GM12878 (cell line): ENCODE measurements at regions of chrX and their contacts with region 1.

Region 1: GRCh38 chrX:53317365-53318069 is 36.1 kb upstream of the IQSEC2 start:
- DNase-seq: no peak
- ATAC-seq: peak; percentile 95
- H3K4me3 ChIP-seq: no peak overlapping the region
- H3K27ac ChIP-seq: no peak overlapping the region
- H3K4me1 ChIP-seq: peaks cover 3% of the 10 kb centered on the region; the same call in 1 of the 2 replicates
- H3K27me3 ChIP-seq: peaks cover 15% of the 10 kb centered on the region in 2 experiments
- CTCF ChIP-seq: peak; percentile 83 to 90 (median 87)
- EP300 ChIP-seq: no peak
- POLR2A ChIP-seq: no peak
- RAD21 ChIP-seq: peak; percentile 70

Region 2: DNA sequence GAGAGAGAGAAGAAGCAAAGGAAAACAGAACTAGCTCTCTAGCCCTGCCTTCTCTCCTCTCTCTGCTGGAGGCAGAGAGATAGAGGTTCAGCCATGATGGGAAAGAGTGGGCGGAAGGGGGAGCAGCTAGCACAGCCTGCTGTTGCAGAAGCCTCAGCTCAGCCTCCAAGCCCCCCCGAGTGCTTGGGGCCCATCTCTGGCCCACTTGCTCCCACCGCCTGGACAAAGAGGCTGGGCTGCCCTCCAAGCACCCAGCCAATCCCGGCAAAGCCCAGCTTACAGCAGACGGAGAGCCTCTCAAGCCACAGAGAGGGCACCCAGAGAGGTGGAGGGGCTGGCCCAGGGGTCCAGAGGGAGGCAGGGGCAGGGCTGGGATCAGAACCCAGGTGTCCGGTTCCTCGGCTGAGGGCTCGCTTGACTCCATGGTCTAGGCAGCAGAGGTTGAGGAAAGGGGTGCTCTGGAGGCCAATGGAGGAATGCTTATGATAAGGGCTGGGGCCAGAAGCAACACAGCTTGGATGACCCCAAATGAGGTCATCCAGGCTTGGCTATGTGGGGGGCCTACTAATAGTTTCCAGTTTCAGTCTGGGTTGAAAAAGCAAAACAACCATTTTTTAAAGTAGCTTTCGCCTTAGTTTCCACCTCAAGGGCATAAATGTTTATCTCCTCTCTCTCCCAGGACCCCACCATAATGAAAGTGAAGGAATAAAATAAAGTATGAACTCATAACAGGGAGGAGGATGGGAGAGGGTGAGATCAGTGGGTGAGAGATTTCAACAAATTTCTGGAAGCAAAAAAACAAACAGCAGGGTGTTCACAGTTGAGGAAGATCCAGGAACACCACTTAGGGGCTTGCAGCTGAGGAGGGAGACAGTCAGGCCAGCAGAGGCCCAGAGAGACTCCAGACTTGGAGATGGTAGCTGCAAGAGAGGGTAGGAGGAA is 11.2 kb before region 1 on chrX:
- CTCF ChIA-PET with region 1: interaction called, 24 read pairs
- POLR2A ChIA-PET with region 1: no interaction called
- RAD21 ChIA-PET with region 1: interaction called, 3 read pairs
- SMC1A ChIA-PET with region 1: interaction called, 4 read pairs
- in situ Hi-C with region 1: no loop called
- intact Hi-C with region 1: no loop called
- DNase-seq: no peak
- ATAC-seq: no peak
- H3K4me3 ChIP-seq: no peak overlapping the region
- H3K27ac ChIP-seq: no peak overlapping the region
- H3K4me1 ChIP-seq: no peaks in the 10 kb centered on the region
- H3K27me3 ChIP-seq: no peaks in the 10 kb centered on the region
- CTCF ChIP-seq: no peak
- EP300 ChIP-seq: no peak
- POLR2A ChIP-seq: no peak
- RAD21 ChIP-seq: no peak

Region 3: DNA sequence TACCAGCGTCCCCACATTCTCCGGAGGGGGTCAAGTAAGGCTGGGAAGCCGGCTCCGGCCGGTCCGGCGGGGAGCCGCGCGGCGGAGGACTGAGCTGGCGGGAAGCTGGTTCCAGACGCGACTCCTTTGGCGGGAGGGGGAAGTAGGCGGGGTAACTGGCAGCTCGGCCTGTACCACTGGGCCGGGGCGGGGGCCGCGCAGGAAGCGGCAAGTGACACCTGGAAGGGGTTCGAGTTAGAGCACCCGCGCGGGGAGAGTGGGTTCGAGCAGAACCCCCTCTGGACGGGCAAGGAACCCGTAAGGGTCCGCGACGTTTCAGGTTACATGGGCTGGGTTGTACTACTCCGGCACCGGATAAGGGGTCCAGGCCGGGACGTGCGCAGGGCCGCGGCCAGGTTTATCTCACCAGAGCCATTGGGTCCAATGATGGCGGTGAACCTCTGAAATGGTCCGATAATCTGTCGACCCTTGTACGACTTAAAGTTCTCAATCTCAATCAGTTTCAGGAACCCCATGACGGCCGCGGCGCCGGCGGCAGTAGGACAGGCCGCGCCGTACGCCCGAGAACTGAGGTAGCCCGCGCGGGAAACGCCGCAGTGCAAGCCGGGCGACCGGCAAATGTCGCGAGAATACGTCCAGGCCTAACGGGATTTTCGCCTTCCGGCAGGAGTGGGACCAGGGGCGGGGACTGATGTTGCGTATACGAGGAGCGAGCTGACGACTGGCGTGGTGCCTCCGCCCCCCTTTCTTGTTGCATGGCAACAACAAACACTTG is 104.8 kb after region 1 on chrX and contains the start of gene SMC1A:
- CTCF ChIA-PET with region 1: interaction called, 6 read pairs
- POLR2A ChIA-PET with region 1: no interaction called
- RAD21 ChIA-PET with region 1: interaction called, 8 read pairs
- SMC1A ChIA-PET with region 1: interaction called, 10 read pairs
- in situ Hi-C with region 1: no loop called
- intact Hi-C with region 1: no loop called
- DNase-seq: peak; percentile 97
- ATAC-seq: peak; percentile 92
- H3K4me3 ChIP-seq: peak within 1 kb of the TSS; percentile 80
- H3K27ac ChIP-seq: peak within 1 kb of the TSS; percentile 98
- H3K4me1 ChIP-seq: peaks cover 6% of the 10 kb centered on the region
- H3K27me3 ChIP-seq: no peaks in the 10 kb centered on the region
- CTCF ChIP-seq: no peak
- EP300 ChIP-seq: no peak
- POLR2A ChIP-seq: peak; percentile 87
- RAD21 ChIP-seq: no peak
- polyA plus RNA-seq, gene SMC1A: 25.6 to 29.6 TPM

Region 4: DNA sequence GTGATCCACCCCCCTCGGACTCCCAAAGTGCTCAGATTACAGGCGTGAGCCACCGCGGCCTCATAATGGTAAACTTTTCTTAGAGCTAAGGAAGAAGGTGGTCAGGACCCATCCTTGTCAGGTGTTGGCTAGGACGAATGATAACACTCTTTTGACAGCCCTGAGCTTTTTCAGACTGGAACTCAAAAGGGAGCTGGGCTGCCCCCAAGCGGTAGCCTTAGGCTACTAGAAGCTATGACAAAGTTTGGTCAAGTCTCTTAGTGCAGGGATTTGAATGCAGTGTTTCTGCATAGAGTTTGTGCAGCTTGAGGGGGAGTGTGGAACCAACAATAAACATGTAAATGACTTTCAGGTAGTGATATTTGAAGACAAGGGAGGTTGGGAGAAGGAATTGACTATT is 128.5 kb after region 1 on chrX:
- CTCF ChIA-PET with region 1: interaction called, 89 read pairs
- POLR2A ChIA-PET with region 1: no interaction called
- RAD21 ChIA-PET with region 1: interaction called, 32 read pairs
- SMC1A ChIA-PET with region 1: interaction called, 14 read pairs
- in situ Hi-C with region 1: no loop called
- intact Hi-C with region 1: no loop called
- DNase-seq: no peak
- ATAC-seq: peak; percentile 73
- H3K4me3 ChIP-seq: no peak overlapping the region
- H3K27ac ChIP-seq: no peak overlapping the region
- H3K4me1 ChIP-seq: peaks cover 4% of the 10 kb centered on the region; the same call in 1 of the 2 replicates
- H3K27me3 ChIP-seq: no peaks in the 10 kb centered on the region
- CTCF ChIP-seq: peak; percentile 67 to 77 (median 72)
- EP300 ChIP-seq: no peak
- POLR2A ChIP-seq: no peak
- RAD21 ChIP-seq: peak; percentile 63

Region 5: DNA sequence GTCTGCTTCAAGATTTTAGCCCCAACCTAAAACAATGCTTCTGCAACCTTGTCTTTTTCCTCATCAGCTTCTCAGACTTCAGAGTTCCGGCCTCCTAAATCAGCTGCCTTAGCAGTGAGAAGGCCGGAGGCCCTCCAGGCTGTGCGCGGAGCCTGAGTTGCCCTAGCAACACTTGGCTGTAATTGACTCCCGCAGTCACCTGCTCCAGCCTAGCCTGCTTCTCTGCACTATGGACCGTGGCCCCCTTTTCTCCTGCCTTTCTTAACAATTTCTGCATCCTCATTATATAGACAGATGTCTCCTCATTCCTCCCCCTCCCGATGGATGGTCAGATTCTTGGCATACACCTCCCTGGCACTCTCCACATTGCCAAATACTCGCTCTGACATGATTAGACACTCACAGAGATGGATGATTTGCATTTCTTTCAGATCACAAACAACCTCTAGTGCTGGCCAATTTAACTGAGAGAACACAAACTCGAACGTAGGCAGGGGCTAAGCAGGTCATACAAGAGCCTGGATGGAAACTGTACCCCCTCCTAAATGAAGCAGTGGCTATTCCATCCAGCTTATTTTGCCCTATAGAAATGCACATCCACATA is 378.5 kb after region 1 on chrX:
- CTCF ChIA-PET with region 1: no interaction called
- POLR2A ChIA-PET with region 1: no interaction called
- RAD21 ChIA-PET with region 1: no interaction called
- SMC1A ChIA-PET with region 1: no interaction called
- in situ Hi-C with region 1: no loop called
- intact Hi-C with region 1: no loop called
- DNase-seq: no peak
- ATAC-seq: peak; percentile 28; the same call in 1 of the 3 replicates
- H3K4me3 ChIP-seq: no peak overlapping the region
- H3K27ac ChIP-seq: no peak overlapping the region
- H3K4me1 ChIP-seq: no peaks in the 10 kb centered on the region
- H3K27me3 ChIP-seq: no peaks in the 10 kb centered on the region
- CTCF ChIP-seq: no peak
- EP300 ChIP-seq: no peak
- POLR2A ChIP-seq: no peak
- RAD21 ChIP-seq: no peak

Region 6: GRCh38 chrX:53831662-53832635 is 514.4 kb after region 1 on chrX:
- CTCF ChIA-PET with region 1: interaction called, 4 read pairs
- POLR2A ChIA-PET with region 1: no interaction called
- RAD21 ChIA-PET with region 1: no interaction called
- SMC1A ChIA-PET with region 1: no interaction called
- in situ Hi-C with region 1: no loop called
- intact Hi-C with region 1: loop called (anchors 10 kb)
- DNase-seq: peak; percentile 40
- ATAC-seq: peak; percentile 98
- H3K4me3 ChIP-seq: no peak overlapping the region
- H3K27ac ChIP-seq: no peak overlapping the region
- H3K4me1 ChIP-seq: no peaks in the 10 kb centered on the region
- H3K27me3 ChIP-seq: no peaks in the 10 kb centered on the region
- CTCF ChIP-seq: peak; percentile 59 to 66 (median 62)
- EP300 ChIP-seq: no peak
- POLR2A ChIP-seq: no peak
- RAD21 ChIP-seq: peak; percentile 70